ENCODE measurements at regions of chr4 and their contacts with region 1.

Region 1: DNA sequence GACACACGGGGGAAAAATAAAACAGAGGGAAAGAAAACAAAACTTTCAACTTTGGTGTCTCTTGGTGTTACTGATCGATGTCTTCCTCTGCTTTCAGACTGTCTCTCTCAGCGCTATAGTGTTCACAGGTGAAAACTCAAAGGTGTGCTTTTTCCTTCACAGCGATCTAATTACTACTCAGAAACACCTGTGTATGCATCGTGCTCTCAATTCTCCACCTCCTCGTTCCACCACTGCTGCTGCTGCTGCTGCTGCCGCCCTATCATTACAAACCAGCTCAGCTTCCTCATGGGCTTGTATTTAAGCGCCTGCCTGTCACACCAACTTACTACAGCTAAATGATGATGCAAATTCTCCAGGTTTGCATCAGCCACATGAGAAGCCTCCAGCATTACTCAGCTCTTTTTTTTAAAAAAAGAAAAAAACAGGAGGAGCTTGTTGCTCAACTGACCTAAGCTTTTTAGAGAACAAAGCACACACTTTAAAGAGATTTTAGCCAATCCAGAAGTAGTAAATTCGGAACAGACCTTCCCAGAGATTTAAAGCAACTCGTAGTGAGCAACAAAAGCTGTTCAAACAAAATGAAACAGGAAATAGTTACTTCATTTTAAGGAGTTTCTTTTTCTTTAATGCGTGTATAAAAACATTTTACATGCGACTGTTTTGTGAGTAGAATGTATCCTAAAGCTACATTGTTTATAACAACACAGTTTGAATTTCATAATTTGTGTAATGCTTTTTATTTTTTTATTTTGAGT is at the start of gene SLC7A11:
- DNase-seq: peak; percentile 98
- H3K4me3 Mint-ChIP-seq: peak within 1 kb of the TSS; percentile 97
- H3K27ac Mint-ChIP-seq: peak within 1 kb of the TSS; percentile 91
- H3K4me1 Mint-ChIP-seq: peaks cover 11% of the 10 kb centered on the region
- H3K27me3 Mint-ChIP-seq: no peaks in the 10 kb centered on the region
- CTCF ChIP-seq: no peak
- total RNA-seq, gene SLC7A11: 103 and 153 TPM in 2 replicates

Region 2: GRCh38 chr4:137531986-137532868 is 710.0 kb before region 1 on chr4 and contains the start of gene PCDH18:
- CTCF ChIA-PET with region 1: no interaction called
- POLR2A ChIA-PET with region 1: no interaction called
- intact Hi-C with region 1: no loop called
- DNase-seq: peak; percentile 64
- H3K4me3 Mint-ChIP-seq: no peak within 1 kb of the TSS
- H3K27ac Mint-ChIP-seq: no peak within 1 kb of the TSS
- H3K4me1 Mint-ChIP-seq: no peaks in the 10 kb centered on the region
- H3K27me3 Mint-ChIP-seq: no peaks in the 10 kb centered on the region
- CTCF ChIP-seq: no peak
- total RNA-seq, gene PCDH18: 3.5 and 4.9 TPM in 2 replicates

Region 3: GRCh38 chr4:138199568-138200235 is 42.6 kb before region 1 on chr4:
- CTCF ChIA-PET with region 1: interaction called, 3 read pairs
- POLR2A ChIA-PET with region 1: interaction called, 80 read pairs
- intact Hi-C with region 1: loop called (anchors 5 kb)
- DNase-seq: peak; percentile 87
- H3K4me3 Mint-ChIP-seq: peak overlapping the region; percentile 69
- H3K27ac Mint-ChIP-seq: peak overlapping the region; percentile 97
- H3K4me1 Mint-ChIP-seq: peaks cover 26% of the 10 kb centered on the region
- H3K27me3 Mint-ChIP-seq: no peaks in the 10 kb centered on the region
- CTCF ChIP-seq: no peak

Region 4: GRCh38 chr4:138226351-138226750 is 15.9 kb before region 1 on chr4:
- CTCF ChIA-PET with region 1: interaction called, 3 read pairs
- POLR2A ChIA-PET with region 1: interaction called, 40 read pairs
- intact Hi-C with region 1: no loop called
- DNase-seq: no peak
- H3K4me3 Mint-ChIP-seq: no peak overlapping the region
- H3K27ac Mint-ChIP-seq: no peak overlapping the region
- H3K4me1 Mint-ChIP-seq: peaks cover 32% of the 10 kb centered on the region
- H3K27me3 Mint-ChIP-seq: no peaks in the 10 kb centered on the region
- CTCF ChIP-seq: no peak

Region 5: DNA sequence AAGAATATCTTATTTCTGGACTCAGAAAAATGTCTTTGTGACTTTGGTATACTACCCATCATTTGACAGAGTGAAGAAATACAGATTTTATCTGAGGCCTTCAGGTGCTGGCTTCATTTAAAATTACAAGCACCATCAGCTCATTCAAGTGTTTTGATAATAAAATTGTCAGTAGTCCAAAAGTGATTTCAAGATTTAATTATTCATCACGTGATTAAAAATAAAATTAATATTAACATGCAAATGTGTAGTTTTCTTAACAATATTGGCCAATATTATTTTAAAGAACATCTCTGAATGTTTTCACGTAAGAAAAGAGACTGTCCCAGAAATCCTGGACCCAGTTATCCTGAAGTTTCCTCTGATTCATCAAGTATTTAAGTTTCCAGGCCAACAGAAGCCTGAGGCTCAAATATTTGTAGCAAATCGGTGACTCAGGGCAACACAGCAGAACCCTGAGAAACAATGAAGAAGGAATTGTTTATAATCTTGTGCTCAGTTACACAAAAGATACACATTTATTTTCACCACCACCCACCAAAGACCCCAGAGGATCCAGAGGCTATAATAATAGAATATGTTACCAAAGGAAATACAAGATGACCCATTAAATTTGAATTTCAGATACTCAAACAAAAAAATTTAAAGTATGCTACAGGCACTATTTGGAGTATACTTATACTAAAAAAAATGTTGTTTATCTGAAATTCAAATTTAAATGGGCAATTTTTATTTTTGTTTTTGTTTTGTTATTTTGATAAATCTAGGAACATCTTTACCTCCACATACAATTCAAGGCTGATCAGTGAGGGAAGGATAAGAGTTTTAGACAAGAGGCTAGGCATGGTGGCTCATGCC is 33.7 kb after region 1 on chr4:
- CTCF ChIA-PET with region 1: interaction called, 5 read pairs
- POLR2A ChIA-PET with region 1: interaction called, 29 read pairs
- intact Hi-C with region 1: no loop called
- DNase-seq: peak; percentile 79
- H3K4me3 Mint-ChIP-seq: no peak overlapping the region
- H3K27ac Mint-ChIP-seq: peak overlapping the region; percentile 93
- H3K4me1 Mint-ChIP-seq: peaks cover 6% of the 10 kb centered on the region
- H3K27me3 Mint-ChIP-seq: no peaks in the 10 kb centered on the region
- CTCF ChIP-seq: no peak

Region 6: DNA sequence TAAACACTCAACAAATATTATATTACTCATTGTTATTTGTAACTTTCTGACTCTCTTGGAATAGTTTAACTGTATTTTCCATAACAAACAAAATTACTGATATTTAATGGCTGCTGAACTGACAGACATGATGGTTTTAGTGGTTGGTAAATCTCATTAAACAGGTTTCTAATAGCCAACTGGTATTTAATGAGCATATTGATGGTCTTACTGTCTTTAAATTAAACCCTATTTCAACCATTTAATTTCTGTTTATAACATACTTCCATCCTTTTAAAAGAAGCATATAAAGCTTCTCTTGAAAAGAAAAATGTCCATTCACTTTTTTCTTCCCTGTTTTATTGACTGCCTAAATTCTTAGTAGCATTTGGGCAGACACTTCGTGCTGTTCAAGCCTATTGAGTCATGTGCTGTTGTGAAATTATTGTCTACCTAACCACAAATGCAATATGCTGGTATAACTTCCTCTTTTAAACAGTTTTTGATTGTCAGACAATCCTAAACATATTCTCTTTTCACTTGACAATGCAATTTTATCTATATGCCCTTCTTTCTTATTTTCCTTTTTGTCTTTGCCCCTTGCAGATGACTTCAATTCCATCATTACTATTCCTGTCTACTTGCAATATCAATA is 163.8 kb after region 1 on chr4:
- CTCF ChIA-PET with region 1: interaction called, 3 read pairs
- POLR2A ChIA-PET with region 1: interaction called, 17 read pairs
- intact Hi-C with region 1: loop called (anchors 2 kb)
- DNase-seq: peak; percentile 76
- H3K4me3 Mint-ChIP-seq: no peak overlapping the region
- H3K27ac Mint-ChIP-seq: peak overlapping the region; percentile 1
- H3K4me1 Mint-ChIP-seq: peaks cover 29% of the 10 kb centered on the region
- H3K27me3 Mint-ChIP-seq: no peaks in the 10 kb centered on the region
- CTCF ChIP-seq: no peak

Region 7: DNA sequence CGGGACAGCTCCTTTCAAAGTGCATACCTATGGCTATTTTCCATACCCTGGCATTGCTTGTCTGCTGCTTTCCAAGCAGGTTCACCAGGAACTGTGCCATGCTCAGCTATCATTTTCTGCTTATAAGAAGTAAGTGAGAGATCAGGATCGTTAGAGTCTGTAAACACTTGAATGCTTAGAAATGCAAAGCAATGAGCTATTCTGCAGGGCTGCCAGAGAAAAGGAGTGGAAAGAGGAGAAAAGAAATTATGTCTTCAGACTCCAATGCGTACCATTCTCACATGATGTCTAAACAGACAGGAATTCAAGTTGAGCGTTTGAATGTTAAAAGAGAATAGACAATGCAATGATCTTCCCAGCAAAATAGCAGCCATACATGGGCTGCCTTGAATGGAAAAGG is 245.4 kb after region 1 on chr4:
- CTCF ChIA-PET with region 1: no interaction called
- POLR2A ChIA-PET with region 1: no interaction called
- intact Hi-C with region 1: no loop called
- DNase-seq: no peak
- H3K4me3 Mint-ChIP-seq: no peak overlapping the region
- H3K27ac Mint-ChIP-seq: no peak overlapping the region
- H3K4me1 Mint-ChIP-seq: no peaks in the 10 kb centered on the region
- H3K27me3 Mint-ChIP-seq: no peaks in the 10 kb centered on the region
- CTCF ChIP-seq: no peak

Region 8: GRCh38 chr4:138522366-138522765 is 280.1 kb after region 1 on chr4:
- CTCF ChIA-PET with region 1: interaction called, 10 read pairs
- POLR2A ChIA-PET with region 1: no interaction called
- intact Hi-C with region 1: loop called (anchors 1 kb)
- DNase-seq: peak; percentile 45
- H3K4me3 Mint-ChIP-seq: no peak overlapping the region
- H3K27ac Mint-ChIP-seq: no peak overlapping the region
- H3K4me1 Mint-ChIP-seq: no peaks in the 10 kb centered on the region
- H3K27me3 Mint-ChIP-seq: no peaks in the 10 kb centered on the region
- CTCF ChIP-seq: peak; percentile 52

Region 9: DNA sequence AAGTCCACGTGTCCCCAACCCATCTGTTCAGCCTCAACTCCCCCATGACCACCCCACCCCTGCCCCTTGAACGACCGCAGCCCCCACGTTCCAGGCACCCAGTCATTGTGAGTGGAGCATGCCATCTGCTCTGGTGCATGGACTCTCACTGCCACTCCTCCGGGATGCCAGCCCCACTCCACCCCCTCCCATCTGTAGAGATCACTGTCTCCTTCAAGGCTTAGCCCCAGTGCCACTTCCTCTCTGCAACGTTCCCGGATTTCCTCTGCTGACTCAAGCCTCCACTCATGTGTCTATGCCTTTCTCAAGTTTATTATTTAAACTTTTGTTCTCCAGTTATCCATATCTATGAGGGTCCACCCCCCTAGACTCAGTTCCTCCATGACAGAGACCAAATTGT is 1857.7 kb after region 1 on chr4:
- CTCF ChIA-PET with region 1: no interaction called
- POLR2A ChIA-PET with region 1: no interaction called
- intact Hi-C with region 1: no loop called
- DNase-seq: no peak
- H3K4me3 Mint-ChIP-seq: no peak overlapping the region
- H3K27ac Mint-ChIP-seq: no peak overlapping the region
- H3K4me1 Mint-ChIP-seq: peaks cover 46% of the 10 kb centered on the region
- H3K27me3 Mint-ChIP-seq: no peaks in the 10 kb centered on the region
- CTCF ChIP-seq: no peak

Measured in MCF 10A (cell line).